ENCODE measurements at regions of chr4 and their contacts with region 1.

Region 1: GRCh38 chr4:36841583-36842326 is 402.8 kb upstream of the NWD2 start:
- DNase-seq: no peak
- ATAC-seq: no peak
- H3K4me3 ChIP-seq: no peak overlapping the region
- H3K27ac ChIP-seq: no peak overlapping the region
- H3K4me1 ChIP-seq: no peaks in the 10 kb centered on the region
- H3K27me3 ChIP-seq: no peaks in the 10 kb centered on the region
- CTCF ChIP-seq: no peak
- POLR2A ChIP-seq: no peak

Region 2: DNA sequence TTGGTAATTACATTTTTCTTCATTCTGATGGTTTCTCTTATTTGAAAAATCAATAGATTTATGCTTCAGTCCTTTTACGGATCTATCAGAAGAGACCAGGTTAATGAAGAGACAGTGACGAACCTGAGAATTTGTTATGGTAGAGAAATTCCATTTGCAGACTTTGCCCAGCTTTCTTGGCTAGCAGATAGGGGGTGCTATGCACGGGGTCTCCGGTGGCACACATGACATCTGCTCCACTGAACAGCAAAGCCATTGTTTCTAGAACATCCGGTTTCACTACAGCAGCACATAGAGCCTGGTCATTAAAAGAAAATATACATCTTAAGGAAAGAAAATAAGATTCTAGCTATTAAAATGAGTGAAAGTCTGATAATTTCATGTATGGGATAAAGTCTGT is 682.5 kb before region 1 on chr4:
- in situ Hi-C with region 1: no loop called
- intact Hi-C with region 1: no loop called
- DNase-seq: no peak
- ATAC-seq: no peak
- H3K4me3 ChIP-seq: no peak overlapping the region
- H3K27ac ChIP-seq: no peak overlapping the region
- H3K4me1 ChIP-seq: no peaks in the 10 kb centered on the region
- H3K27me3 ChIP-seq: no peaks in the 10 kb centered on the region
- CTCF ChIP-seq: no peak
- POLR2A ChIP-seq: no peak

Region 3: GRCh38 chr4:36747277-36748129 is 94.3 kb before region 1 on chr4:
- in situ Hi-C with region 1: loop called in 1 of 4 experiments (anchors 25 kb)
- intact Hi-C with region 1: no loop called
- DNase-seq: no peak
- ATAC-seq: no peak
- H3K4me3 ChIP-seq: no peak overlapping the region
- H3K27ac ChIP-seq: no peak overlapping the region
- H3K4me1 ChIP-seq: no peaks in the 10 kb centered on the region
- H3K27me3 ChIP-seq: no peaks in the 10 kb centered on the region
- CTCF ChIP-seq: no peak
- POLR2A ChIP-seq: no peak

Region 4: DNA sequence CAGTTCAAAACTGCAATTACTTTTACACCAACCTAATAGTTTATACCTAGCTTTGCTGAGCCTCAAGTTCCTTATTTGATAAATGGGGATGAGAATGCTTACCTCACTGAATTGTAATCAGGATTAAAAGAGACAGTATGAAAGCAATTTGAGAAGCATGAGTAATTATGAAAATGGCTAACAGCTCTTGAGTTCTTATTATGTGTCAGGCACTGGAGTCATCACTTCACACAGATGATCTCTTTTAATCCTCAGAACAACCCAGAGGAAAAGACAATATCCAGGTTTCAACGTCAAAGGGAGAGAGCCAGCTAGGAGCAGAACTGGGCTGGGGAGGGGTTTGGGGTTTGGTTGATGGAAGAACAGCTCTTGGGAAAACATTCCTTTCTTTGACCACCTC is 181.7 kb after region 1 on chr4:
- in situ Hi-C with region 1: no loop called
- intact Hi-C with region 1: no loop called
- DNase-seq: no peak
- ATAC-seq: no peak
- H3K4me3 ChIP-seq: no peak overlapping the region
- H3K27ac ChIP-seq: no peak overlapping the region
- H3K4me1 ChIP-seq: no peaks in the 10 kb centered on the region
- H3K27me3 ChIP-seq: no peaks in the 10 kb centered on the region
- CTCF ChIP-seq: no peak
- POLR2A ChIP-seq: no peak

Measured in gastrocnemius medialis (tissue), 4 donors.